ENCODE measurements at regions of chr13 and their contacts with region 1.

Region 1: DNA sequence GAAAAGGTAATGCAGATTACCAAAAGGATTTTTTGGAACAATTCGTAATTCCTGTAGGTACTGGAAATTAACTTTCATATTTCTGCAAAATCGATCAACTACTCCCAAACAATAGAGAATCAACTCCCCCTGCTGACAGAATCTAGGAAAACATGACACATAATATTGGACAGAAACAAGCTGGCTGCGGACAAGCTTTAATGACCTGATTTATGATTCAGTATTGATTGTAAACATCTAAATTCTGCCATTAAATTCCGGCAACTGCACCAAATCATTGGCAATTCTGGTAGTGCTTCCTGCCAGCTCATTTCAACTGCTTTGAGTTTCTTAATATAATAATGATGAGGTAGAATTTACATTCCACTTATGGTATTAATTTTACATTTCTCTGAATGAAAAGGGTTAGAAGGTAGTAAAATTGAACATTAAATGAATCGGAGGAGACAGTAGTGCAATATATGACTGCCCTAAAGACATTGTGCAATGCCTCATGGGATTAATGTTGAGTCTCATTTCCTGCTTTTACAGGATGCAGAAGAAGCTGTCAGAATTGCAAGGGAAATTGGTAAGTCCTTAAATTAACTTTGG is 146.5 kb downstream of the PCCA start:
- DNase-seq: peak; percentile 28
- H3K4me3 ChIP-seq: no peak overlapping the region
- H3K27ac ChIP-seq: no peak overlapping the region
- H3K4me1 ChIP-seq: peaks cover 2% of the 10 kb centered on the region
- H3K27me3 ChIP-seq: no peaks in the 10 kb centered on the region
- CTCF ChIP-seq: peak; percentile 43 to 58

Region 2: DNA sequence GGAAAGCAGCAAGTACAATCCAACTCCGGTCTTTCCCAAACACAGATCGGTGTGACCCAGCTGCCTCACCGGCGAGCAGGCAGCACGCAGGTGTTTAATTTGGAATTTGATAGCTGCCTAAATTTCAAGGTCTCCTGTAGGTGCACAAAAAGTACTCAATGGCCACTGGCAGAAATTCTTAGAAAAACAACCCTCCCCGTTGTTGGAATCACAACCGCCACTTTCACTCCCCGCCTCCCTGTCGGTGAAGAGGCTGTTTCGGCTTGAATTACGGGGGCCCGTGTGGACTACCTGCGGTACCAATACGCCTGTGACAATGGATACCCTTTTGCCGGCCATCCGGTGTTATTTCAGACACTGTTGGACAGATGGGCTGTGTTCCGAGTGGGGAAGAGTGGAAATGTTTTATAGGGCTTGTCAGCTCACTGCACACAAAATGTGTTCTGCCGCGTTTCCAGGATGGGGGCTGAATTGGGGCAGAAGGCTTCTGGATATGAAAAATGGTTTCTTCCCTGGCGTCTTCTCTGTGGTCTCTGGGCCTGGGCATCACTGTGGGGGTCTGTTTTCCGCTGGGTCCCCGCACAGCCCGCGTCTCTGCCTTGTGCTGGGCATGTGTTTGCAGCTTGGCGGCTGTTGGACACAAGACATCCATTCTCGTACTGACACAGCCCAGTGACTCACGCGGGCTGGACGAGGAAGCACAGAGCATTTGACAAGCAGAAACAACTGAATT is 309.2 kb before region 1 on chr13:
- CTCF ChIA-PET with region 1: no interaction called
- dilution Hi-C with region 1: loop called (anchors 5 kb)
- in situ Hi-C with region 1: loop called in 1 of 2 experiments (anchors 10 kb)
- intact Hi-C with region 1: no loop called
- DNase-seq: no peak
- H3K4me3 ChIP-seq: no peak overlapping the region
- H3K27ac ChIP-seq: no peak overlapping the region
- H3K4me1 ChIP-seq: no peaks in the 10 kb centered on the region
- H3K27me3 ChIP-seq: no peaks in the 10 kb centered on the region
- CTCF ChIP-seq: no peak

Region 3: GRCh38 chr13:100088644-100089464 is 146.6 kb before region 1 on chr13 and contains the start of gene PCCA:
- CTCF ChIA-PET with region 1: no interaction called
- dilution Hi-C with region 1: no loop called
- in situ Hi-C with region 1: no loop called
- intact Hi-C with region 1: loop called (anchors 1 kb)
- DNase-seq: peak; percentile 91
- H3K4me3 ChIP-seq: peak within 1 kb of the TSS; percentile 65 to 94 (median 84)
- H3K27ac ChIP-seq: peak within 1 kb of the TSS; percentile 50
- H3K4me1 ChIP-seq: peaks cover 20% of the 10 kb centered on the region
- H3K27me3 ChIP-seq: no peaks in the 10 kb centered on the region
- CTCF ChIP-seq: no peak
- total RNA-seq, gene PCCA: 16.9 to 31.5 TPM

Region 4: GRCh38 chr13:100483841-100484381 is 248.5 kb after region 1 on chr13:
- CTCF ChIA-PET with region 1: interaction called, 15 read pairs
- dilution Hi-C with region 1: no loop called
- in situ Hi-C with region 1: no loop called
- intact Hi-C with region 1: no loop called
- DNase-seq: no peak
- H3K4me3 ChIP-seq: no peak overlapping the region
- H3K27ac ChIP-seq: no peak overlapping the region
- H3K4me1 ChIP-seq: no peaks in the 10 kb centered on the region
- H3K27me3 ChIP-seq: no peaks in the 10 kb centered on the region
- CTCF ChIP-seq: no peak